ENCODE measurements at regions of chr4 and their contacts with region 1.

Region 1: GRCh38 chr4:88442703-88443191 is 14.2 kb upstream of the HERC5 start:
- DNase-seq: no peak
- ATAC-seq: no peak
- H3K4me3 ChIP-seq: no peak overlapping the region
- H3K27ac ChIP-seq: no peak overlapping the region
- H3K4me1 ChIP-seq: no peaks in the 10 kb centered on the region
- H3K27me3 ChIP-seq: no peaks in the 10 kb centered on the region
- CTCF ChIP-seq: no peak
- EP300 ChIP-seq: no peak
- POLR2A ChIP-seq: no peak
- RAD21 ChIP-seq: no peak

Region 2: GRCh38 chr4:88429401-88429800 is 13.3 kb before region 1 on chr4:
- CTCF ChIA-PET with region 1: interaction called, 3 read pairs
- POLR2A ChIA-PET with region 1: interaction called, 3 read pairs
- RAD21 ChIA-PET with region 1: no interaction called
- SMC1A ChIA-PET with region 1: interaction called, 11 read pairs
- in situ Hi-C with region 1: no loop called
- intact Hi-C with region 1: no loop called
- DNase-seq: no peak
- ATAC-seq: no peak
- H3K4me3 ChIP-seq: no peak overlapping the region
- H3K27ac ChIP-seq: no peak overlapping the region
- H3K4me1 ChIP-seq: no peaks in the 10 kb centered on the region
- H3K27me3 ChIP-seq: no peaks in the 10 kb centered on the region
- CTCF ChIP-seq: no peak
- EP300 ChIP-seq: no peak
- POLR2A ChIP-seq: no peak
- RAD21 ChIP-seq: no peak